Activated naive CD4-positive, alpha-beta T cell treated with anti-CD3 and anti-CD28 coated beads for 36 hours (primary cell): ENCODE measurements at regions of chr13 and their contacts with region 1.

Region 1: GRCh38 chr13:48448959-48449614 is 36.2 kb upstream of the LPAR6 start:
- DNase-seq: no peak
- H3K4me3 Mint-ChIP-seq: no peak overlapping the region
- H3K27ac Mint-ChIP-seq: no peak overlapping the region
- H3K4me1 Mint-ChIP-seq: peaks cover 26% of the 10 kb centered on the region
- H3K27me3 Mint-ChIP-seq: no peaks in the 10 kb centered on the region

Region 2: DNA sequence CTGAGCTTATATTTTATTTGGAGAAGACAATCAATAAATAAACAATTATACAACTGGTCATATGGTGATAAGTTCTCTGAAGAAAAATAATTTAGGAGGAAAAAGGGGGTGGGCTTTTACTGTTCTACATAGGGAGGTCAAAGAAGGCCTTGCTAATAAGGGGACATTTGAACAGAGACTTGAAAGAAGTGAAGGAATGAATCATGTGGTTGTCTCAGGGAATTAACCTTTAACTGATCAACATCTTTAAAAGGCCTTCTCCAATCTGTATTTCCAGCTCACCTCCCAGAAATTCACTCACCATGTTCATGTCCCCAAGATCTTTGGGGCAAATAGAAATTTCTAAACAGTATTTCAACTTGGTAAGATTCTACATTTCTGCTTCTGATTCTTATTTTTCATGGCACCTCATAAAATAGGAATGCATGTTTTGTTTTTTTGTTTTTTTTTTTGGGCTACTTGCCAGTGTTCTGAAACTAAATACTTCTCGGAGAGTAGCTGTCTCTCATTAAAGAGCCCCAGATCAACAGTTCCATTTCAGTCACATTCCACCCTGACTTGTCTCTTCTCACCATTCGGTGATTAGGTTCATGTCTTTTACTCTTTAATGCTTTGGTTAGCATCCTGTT is 17.0 kb before region 1 on chr13:
- CTCF ChIA-PET with region 1: interaction called, 6 read pairs
- intact Hi-C with region 1: loop called (anchors 2 kb)
- DNase-seq: no peak
- H3K4me3 Mint-ChIP-seq: no peak overlapping the region
- H3K27ac Mint-ChIP-seq: no peak overlapping the region
- H3K4me1 Mint-ChIP-seq: peaks cover 48% of the 10 kb centered on the region
- H3K27me3 Mint-ChIP-seq: no peaks in the 10 kb centered on the region

Region 3: GRCh38 chr13:48477191-48477855 is 28.2 kb after region 1 on chr13:
- CTCF ChIA-PET with region 1: no interaction called
- intact Hi-C with region 1: loop called (anchors 1 kb)
- DNase-seq: no peak
- H3K4me3 Mint-ChIP-seq: no peak overlapping the region
- H3K27ac Mint-ChIP-seq: no peak overlapping the region
- H3K4me1 Mint-ChIP-seq: no peaks in the 10 kb centered on the region
- H3K27me3 Mint-ChIP-seq: no peaks in the 10 kb centered on the region

Region 4: DNA sequence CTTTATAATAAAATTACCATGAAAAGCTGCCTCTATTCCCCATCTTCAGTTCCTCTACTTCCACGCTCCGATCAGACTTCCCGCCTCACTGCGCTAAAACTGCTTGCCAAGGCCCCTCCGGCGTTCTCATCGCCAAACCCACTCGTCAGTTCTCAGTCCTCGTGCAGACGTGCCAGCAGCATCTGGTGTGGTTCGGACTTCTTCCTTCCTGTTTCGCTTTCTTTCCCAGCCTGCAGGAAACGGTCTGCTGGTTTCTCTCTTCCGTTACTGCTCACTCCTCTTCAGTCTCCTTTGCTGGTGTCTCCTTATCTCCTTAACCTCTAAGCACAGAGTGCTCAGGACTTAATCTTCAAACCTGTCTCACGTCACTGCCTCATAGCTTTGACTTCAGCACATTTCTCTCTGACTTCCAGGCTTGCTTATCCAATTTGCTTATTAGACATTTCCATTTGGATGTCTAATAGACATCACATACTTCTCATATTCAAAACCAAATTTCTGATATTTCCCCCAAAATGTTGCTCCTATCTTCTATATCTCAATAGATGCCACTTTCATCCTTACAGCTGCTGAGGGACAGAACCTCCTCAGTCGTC is 43.5 kb after region 1 on chr13:
- CTCF ChIA-PET with region 1: no interaction called
- intact Hi-C with region 1: loop called (anchors 2 kb)
- DNase-seq: peak; percentile 74
- H3K4me3 Mint-ChIP-seq: no peak overlapping the region
- H3K27ac Mint-ChIP-seq: no peak overlapping the region
- H3K4me1 Mint-ChIP-seq: peaks cover 39% of the 10 kb centered on the region
- H3K27me3 Mint-ChIP-seq: no peaks in the 10 kb centered on the region